HCT116 (cell line): ENCODE measurements at regions of chr5 and their contacts with region 1.

Region 1: GRCh38 chr5:55172051-55172899 is 702 bp downstream of the CDC20B start:
- DNase-seq: peak; percentile 85
- ATAC-seq: peak; percentile 42
- H3K4me3 ChIP-seq: peak overlapping the region; percentile 33 to 49
- H3K27ac ChIP-seq: no peak overlapping the region
- H3K4me1 ChIP-seq: peaks cover 14 to 37% of the 10 kb centered on the region in 2 experiments; a peak in 3 of 4 replicates
- H3K27me3 ChIP-seq: no peaks in the 10 kb centered on the region
- CTCF ChIP-seq: peak; percentile 68 to 87 (median 78)
- POLR2A ChIP-seq: no peak
- RAD21 ChIP-seq: peak; percentile 94

Region 2: DNA sequence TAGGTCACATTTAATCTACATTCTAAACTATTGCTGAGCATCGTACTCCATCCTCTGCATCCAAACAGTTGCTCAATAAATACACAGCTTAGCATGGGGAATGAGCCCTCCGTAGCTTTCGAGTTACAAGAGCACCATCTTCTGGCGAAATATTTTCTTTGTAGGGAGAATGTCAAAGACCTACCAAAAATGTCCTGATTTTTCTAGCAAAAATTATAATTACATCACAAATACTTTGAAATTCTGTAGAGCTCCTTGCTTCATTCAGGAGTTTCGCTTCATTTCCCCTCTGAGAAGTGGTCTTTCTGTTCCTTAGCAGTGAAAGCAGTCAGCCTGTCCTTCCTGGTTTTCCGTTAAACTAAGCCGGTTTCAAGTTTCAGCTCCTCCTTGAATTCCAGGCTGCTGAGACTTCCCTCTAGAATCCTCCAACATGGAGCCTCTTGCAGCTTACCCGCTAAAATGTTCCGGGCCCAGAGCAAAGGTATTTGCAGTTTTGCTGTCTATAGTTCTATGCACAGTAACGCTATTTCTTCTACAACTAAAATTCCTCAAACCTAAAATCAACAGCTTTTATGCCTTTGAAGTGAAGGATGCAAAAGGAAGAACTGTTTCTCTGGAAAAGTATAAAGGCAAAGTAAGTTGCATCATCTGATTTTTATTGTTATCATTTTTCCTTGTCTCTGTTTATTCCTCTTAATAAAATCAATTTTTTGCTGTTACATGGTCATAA is 12.3 kb before region 1 on chr5 and contains the start of gene GPX8:
- CTCF ChIA-PET with region 1: interaction called, 14 read pairs
- POLR2A ChIA-PET with region 1: interaction called, 3 read pairs
- RAD21 ChIA-PET with region 1: no interaction called
- intact Hi-C with region 1: no loop called
- DNase-seq: peak; percentile 77
- ATAC-seq: peak; percentile 91
- H3K4me3 ChIP-seq: peak within 1 kb of the TSS; percentile 63 to 77
- H3K27ac ChIP-seq: peak within 1 kb of the TSS; percentile 52
- H3K4me1 ChIP-seq: peaks cover 0 to 19% of the 10 kb centered on the region in 2 experiments; a peak in 2 of 4 replicates
- H3K27me3 ChIP-seq: no peaks in the 10 kb centered on the region
- CTCF ChIP-seq: peak; percentile 44 to 83 (median 81); a peak in 5 of 6 replicates
- POLR2A ChIP-seq: peak; percentile 80
- RAD21 ChIP-seq: peak; percentile 90
- total RNA-seq, gene GPX8: 36.5 TPM

Region 3: GRCh38 chr5:55226027-55226933 is 54.0 kb after region 1 on chr5:
- CTCF ChIA-PET with region 1: interaction called, 4 read pairs
- POLR2A ChIA-PET with region 1: interaction called, 4 read pairs
- RAD21 ChIA-PET with region 1: no interaction called
- intact Hi-C with region 1: loop called (anchors 2 kb)
- DNase-seq: peak; percentile 72
- ATAC-seq: peak; percentile 85
- H3K4me3 ChIP-seq: peak overlapping the region; percentile 62 to 75
- H3K27ac ChIP-seq: peak overlapping the region; percentile 92
- H3K4me1 ChIP-seq: peaks cover 10 to 19% of the 10 kb centered on the region in 2 experiments
- H3K27me3 ChIP-seq: no peaks in the 10 kb centered on the region
- CTCF ChIP-seq: peak in 2 of 3 experiments; percentile 83 to 92; a peak in 4 of 6 replicates
- POLR2A ChIP-seq: peak; percentile 71
- RAD21 ChIP-seq: no peak

Region 4: DNA sequence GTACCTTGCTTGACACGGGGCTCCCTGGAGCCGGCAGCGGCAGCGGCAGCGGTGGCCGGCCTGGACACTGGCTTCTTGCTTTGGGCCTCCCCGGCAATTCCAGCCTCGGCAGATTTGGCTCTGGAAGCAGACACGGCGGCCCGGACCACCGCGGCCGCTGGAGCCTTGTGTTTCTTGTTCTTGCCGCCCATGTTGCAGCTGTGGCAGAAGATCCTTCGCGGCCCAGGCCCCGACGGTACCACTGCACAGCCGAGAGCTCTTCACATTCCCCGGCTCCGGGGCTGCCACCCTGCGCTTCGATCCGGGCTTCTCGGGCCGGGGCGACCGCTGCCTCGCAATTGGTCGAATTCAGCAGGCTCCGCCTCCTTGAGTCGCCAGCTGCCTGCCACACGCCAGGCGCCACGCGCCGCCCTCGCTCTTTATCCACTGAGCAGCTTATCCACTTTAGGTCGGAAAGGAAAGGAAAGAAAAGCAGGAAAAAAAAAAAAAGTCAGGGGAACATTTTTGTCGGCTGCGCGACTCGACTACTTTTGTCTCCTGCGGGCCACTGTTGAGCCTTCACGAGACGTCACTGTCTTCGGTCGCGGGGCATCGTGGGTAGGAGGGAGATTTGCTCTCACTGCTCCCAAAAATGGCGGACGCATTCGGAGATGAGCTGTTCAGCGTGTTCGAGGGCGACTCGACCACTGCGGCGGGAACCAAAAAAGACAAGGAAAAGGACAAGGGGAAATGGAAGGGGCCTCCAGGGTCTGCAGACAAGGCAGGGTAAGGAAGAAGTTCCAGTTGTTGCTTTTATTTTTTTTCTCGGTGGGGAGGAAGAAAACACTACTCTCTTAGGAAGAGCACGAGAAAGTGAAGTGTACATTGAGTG is 135.3 kb after region 1 on chr5 and contains the starts of genes DHX29 and MTREX:
- CTCF ChIA-PET with region 1: no interaction called
- POLR2A ChIA-PET with region 1: no interaction called
- RAD21 ChIA-PET with region 1: no interaction called
- intact Hi-C with region 1: loop called (anchors 5 kb)
- DNase-seq: peak; percentile 80
- ATAC-seq: peak; percentile 93
- H3K4me3 ChIP-seq: peak within 1 kb of the TSS; percentile 89 to 96
- H3K27ac ChIP-seq: peak within 1 kb of the TSS; percentile 93
- H3K4me1 ChIP-seq: peaks cover 18 to 19% of the 10 kb centered on the region in 2 experiments
- H3K27me3 ChIP-seq: no peaks in the 10 kb centered on the region
- CTCF ChIP-seq: no peak
- POLR2A ChIP-seq: peak; percentile 53
- RAD21 ChIP-seq: no peak
- total RNA-seq, gene DHX29: 24.3 TPM
- total RNA-seq, gene MTREX: 101 TPM

Region 5: DNA sequence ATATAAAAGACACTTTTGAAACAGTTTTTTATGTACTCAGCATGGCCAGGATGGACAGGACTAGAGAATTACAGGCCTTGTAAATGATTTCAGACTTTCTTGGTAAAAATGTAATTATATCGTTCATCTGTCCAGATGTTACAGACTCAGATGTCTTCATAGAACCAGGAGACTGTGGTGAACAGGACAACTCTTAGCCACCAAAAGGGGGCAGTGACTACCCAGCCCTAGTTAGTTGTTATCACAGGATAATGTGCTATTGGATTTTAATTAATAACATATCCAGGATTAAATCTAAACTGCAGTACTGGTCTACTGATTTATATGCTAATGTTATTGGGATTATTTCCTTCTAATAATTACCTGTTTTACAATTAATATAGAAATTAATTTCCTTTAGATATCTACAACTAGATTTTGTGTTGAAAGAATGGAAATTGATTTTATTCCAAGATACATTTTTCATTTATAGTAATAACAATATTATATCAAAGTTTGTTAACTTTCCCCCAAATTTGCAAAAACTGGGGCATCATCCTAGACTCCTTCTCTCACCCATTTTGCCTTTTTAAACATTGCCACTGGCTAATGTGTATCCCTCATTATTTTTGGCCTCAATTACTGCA is 234.9 kb after region 1 on chr5:
- CTCF ChIA-PET with region 1: no interaction called
- POLR2A ChIA-PET with region 1: no interaction called
- RAD21 ChIA-PET with region 1: interaction called in 1 of 2 experiments, 4 read pairs
- intact Hi-C with region 1: loop called (anchors 5 kb)
- DNase-seq: peak; percentile 22
- ATAC-seq: peak; percentile 84
- H3K4me3 ChIP-seq: no peak overlapping the region
- H3K27ac ChIP-seq: no peak overlapping the region
- H3K4me1 ChIP-seq: no peaks in the 10 kb centered on the region
- H3K27me3 ChIP-seq: no peaks in the 10 kb centered on the region
- CTCF ChIP-seq: peak; percentile 50 to 75 (median 72); a peak in 5 of 6 replicates
- POLR2A ChIP-seq: no peak
- RAD21 ChIP-seq: peak; percentile 69

Region 6: DNA sequence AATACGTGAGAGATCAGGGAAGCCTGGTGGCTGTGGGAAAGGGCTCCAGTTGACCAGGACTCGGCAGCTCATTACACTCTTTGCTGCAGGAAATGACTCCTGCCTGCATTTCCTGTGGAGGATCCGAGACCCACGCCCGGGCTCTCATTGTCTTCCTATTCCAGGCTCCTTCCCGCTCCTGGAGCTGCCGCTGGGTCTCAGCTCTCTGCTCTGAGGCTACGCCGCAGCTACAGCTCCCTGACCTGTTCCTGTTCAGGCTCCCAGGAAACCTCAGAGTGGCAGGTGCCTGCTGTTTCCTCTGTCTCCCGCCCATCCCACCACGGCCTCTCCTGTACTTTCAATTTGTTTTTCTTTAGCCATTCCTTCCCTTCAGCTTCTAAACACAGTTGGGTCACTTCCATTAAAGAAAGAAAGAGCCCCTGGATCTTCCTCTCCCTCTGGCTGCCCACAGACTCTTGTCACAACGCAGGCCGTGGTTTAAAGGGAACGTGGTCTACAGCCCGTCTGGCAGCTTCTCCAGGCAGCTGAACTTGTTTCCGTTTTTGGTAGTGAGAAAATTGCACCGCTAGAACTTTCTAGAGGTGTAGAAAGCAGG is 751.0 kb after region 1 on chr5:
- CTCF ChIA-PET with region 1: no interaction called
- POLR2A ChIA-PET with region 1: no interaction called
- RAD21 ChIA-PET with region 1: no interaction called
- intact Hi-C with region 1: loop called (anchors 2 kb)
- DNase-seq: no peak
- ATAC-seq: no peak
- H3K4me3 ChIP-seq: no peak overlapping the region
- H3K27ac ChIP-seq: no peak overlapping the region
- H3K4me1 ChIP-seq: no peaks in the 10 kb centered on the region
- H3K27me3 ChIP-seq: no peaks in the 10 kb centered on the region
- CTCF ChIP-seq: no peak
- POLR2A ChIP-seq: no peak
- RAD21 ChIP-seq: no peak

Region 7: DNA sequence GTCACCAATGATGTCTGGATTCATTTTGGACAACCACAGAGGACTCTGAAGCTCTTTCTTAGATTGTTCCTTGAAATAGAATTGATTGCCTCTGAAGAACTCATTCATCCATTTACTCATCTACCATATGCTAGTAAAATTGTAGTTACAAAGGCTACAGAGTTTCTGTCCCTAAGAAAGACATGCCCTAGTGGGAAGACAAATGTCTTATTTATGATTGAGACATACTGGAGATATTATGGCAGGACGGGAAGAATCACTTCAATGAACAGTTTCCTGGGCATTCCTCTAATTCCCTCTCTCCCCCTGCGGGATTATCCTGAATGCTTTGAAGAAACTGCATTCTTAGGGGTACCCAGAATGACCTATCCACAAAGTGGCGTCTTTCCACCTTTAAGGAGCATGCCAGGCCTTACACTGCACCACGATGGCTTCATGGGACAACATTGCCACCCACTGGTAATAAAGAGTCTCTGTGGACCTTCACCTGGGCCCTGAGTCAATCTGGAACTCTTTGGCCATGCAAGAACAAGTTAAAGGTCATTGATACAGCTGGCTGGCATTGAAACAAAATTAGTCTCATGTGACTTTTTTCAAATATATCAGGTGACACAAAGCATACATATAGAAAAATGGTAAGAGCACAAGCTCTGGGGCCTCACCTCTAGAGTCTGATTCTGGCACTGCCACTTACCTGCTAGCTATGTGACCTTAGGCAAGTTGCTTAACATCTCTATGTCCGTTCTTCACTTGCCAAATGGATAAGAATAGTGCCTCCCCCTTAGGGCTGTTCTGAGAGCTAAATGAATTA is 1028.8 kb after region 1 on chr5:
- CTCF ChIA-PET with region 1: interaction called, 3 read pairs
- POLR2A ChIA-PET with region 1: no interaction called
- RAD21 ChIA-PET with region 1: no interaction called
- intact Hi-C with region 1: loop called (anchors 1 kb)
- DNase-seq: peak; percentile 69
- ATAC-seq: peak; percentile 100
- H3K4me3 ChIP-seq: no peak overlapping the region
- H3K27ac ChIP-seq: no peak overlapping the region
- H3K4me1 ChIP-seq: no peaks in the 10 kb centered on the region
- H3K27me3 ChIP-seq: no peaks in the 10 kb centered on the region
- CTCF ChIP-seq: peak; percentile 71 to 97 (median 86)
- POLR2A ChIP-seq: no peak
- RAD21 ChIP-seq: peak; percentile 97